ENCODE measurements at regions of chr2 and their contacts with region 1.

Region 1: DNA sequence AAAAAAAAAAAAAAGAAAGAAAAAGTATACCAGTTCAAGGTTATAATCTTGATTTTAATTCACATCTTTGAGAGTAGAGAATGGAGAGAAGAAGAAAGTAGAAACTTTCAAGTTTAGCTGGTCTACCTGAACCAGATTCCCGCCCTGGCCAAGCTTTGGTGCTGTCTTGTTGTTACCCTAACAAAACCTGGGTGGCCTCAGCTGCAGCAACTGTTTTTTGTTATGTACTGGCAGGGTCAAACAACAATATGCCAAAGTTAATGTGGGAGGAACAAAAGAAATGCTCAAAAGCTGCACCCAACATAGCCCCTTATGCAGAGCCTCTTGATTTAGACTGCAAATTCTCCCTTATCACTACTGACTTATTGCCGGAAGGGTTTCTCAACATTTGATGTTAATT is 165.3 kb upstream of the TFPI start:
- DNase-seq: no peak
- H3K4me3 ChIP-seq: no peak overlapping the region
- H3K27ac ChIP-seq: no peak overlapping the region
- H3K4me1 ChIP-seq: no peaks in the 10 kb centered on the region
- H3K27me3 ChIP-seq: no peaks in the 10 kb centered on the region
- CTCF ChIP-seq: no peak

Region 2: GRCh38 chr2:187679454-187679853 is 40.1 kb before region 1 on chr2:
- CTCF ChIA-PET with region 1: no interaction called
- dilution Hi-C with region 1: no loop called
- in situ Hi-C with region 1: no loop called
- intact Hi-C with region 1: no loop called
- DNase-seq: no peak
- H3K4me3 ChIP-seq: no peak overlapping the region
- H3K27ac ChIP-seq: no peak overlapping the region
- H3K4me1 ChIP-seq: no peaks in the 10 kb centered on the region
- H3K27me3 ChIP-seq: no peaks in the 10 kb centered on the region
- CTCF ChIP-seq: no peak

Region 3: DNA sequence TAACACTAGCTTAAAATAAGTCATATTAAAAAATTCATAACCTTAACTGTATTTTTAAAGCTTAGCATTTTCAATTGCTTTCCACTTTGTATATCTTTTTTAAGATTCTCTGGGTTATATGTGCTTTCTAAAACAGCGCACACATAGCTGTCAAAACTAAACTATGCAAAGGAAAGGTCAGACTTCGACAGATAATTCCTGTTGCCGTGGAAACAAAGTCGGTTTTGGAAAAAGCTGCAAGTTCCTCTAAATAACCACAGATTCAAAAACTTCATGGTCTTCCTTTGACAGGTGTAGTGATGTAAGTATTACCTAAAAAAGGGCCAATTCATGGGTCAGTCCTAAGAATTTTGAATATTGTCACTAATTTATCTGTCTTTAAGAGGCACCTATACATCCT is 84.3 kb after region 1 on chr2:
- CTCF ChIA-PET with region 1: no interaction called
- dilution Hi-C with region 1: loop called (anchors 5 kb)
- in situ Hi-C with region 1: no loop called
- intact Hi-C with region 1: no loop called
- DNase-seq: no peak
- H3K4me3 ChIP-seq: no peak overlapping the region
- H3K27ac ChIP-seq: no peak overlapping the region
- H3K4me1 ChIP-seq: no peaks in the 10 kb centered on the region
- H3K27me3 ChIP-seq: no peaks in the 10 kb centered on the region
- CTCF ChIP-seq: no peak

Measured in mammary epithelial cell (primary cell).